ENCODE measurements at regions of chr9 and their contacts with region 1.

Region 1: DNA sequence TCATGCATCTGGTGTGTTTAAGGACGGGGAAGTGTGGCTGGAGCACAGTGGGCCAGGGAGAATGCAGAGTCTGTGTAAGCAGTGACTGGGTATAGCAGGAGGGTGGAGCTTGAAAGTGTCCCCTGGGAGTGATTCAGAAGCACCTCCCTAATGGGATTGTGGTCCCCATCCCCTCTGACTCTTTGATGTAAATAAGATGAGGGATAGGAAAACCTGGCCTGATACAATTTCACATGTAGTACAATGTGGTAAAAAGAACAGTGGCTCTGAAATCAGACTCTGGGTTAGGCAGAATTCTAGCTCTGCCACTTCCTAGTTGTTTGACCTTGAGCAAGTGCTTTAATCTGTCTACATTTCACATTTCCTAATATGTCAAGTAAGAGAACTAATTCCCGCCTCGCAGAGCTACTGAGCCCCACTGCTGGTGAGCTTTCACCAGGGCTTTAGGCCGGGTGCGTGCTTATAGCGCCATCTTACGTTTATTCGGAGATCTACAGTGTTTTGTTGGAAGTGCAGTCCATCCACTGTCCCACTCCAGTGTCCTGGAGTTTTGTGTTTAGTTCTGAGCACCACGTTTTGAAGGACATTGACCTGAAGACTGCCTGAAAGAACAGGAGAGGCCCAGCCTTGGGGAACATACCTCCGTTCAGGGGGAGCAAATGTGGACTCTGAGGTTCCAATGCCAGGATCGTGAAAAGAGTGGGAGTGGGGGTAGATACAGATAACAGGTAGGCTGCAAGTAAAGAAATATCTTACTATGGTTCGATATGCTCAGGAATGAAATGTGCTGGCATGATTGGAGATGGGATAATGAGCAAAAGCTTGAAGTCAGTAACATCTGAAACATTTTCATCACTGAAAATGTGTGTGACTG is 51.2 kb upstream of the TESK1 start:
- DNase-seq: peak; percentile 81 to 90 (median 81)
- H3K4me3 ChIP-seq: peak overlapping the region in 1 of 3 experiments; percentile 27
- H3K4me3 Mint-ChIP-seq: no peak overlapping the region
- H3K27ac ChIP-seq: peak overlapping the region; percentile 41 to 76
- H3K27ac Mint-ChIP-seq: no peak overlapping the region
- H3K4me1 ChIP-seq: peaks cover 11 to 13% of the 10 kb centered on the region in 2 donors
- H3K4me1 Mint-ChIP-seq: peaks cover 3% of the 10 kb centered on the region
- H3K27me3 ChIP-seq: no peaks in the 10 kb centered on the region
- H3K27me3 Mint-ChIP-seq: peaks cover 0 to 2% (median 0%) of the 10 kb centered on the region in 3 donors
- CTCF ChIP-seq: peak; percentile 93

Region 2: DNA sequence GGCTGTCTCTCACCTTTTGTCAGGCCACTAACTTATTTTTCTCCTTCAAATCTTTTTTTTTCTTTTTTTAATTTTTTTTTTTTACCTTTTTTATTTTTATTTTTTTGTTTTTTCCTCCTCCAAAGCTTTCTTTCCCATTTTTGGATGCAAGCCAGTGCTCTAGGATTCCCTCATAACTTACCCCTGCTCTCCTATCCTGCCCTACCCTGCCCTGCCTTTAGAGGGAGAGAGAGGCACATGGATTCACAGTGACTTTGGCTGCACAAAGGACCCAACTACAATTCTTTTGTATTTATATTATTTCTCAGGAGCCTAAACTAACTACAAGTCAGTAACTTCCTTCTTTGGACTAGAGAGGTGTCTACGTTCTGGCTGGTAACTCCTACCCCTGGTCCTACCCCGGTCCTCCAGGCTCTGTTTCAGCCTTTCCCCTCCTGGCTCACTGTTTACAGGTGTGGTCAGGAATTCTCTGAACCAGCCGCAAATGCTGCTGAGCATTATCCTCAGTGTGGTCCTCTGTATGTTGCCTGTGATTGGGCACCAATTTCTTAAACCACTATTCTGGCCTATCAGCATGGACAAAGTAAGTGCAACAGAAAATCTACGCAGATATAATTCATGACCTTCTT is 72.4 kb before region 1 on chr9:
- intact Hi-C with region 1: loop called (anchors 2 kb)
- DNase-seq: peak; percentile 38 to 54 (median 40)
- H3K4me3 ChIP-seq: no peak overlapping the region
- H3K4me3 Mint-ChIP-seq: no peak overlapping the region
- H3K27ac ChIP-seq: no peak overlapping the region
- H3K27ac Mint-ChIP-seq: peak overlapping the region in 2 of 7 donors; percentile 42 to 61
- H3K4me1 ChIP-seq: no peaks in the 10 kb centered on the region
- H3K4me1 Mint-ChIP-seq: no peaks in the 10 kb centered on the region
- H3K27me3 ChIP-seq: peaks cover 0 to 3% of the 10 kb centered on the region in 2 donors
- H3K27me3 Mint-ChIP-seq: peaks cover 0 to 6% (median 2%) of the 10 kb centered on the region in 3 donors
- CTCF ChIP-seq: peak; percentile 77

Region 3: GRCh38 chr9:35489313-35490154 is 64.4 kb before region 1 on chr9 and contains the start of gene RUSC2:
- intact Hi-C with region 1: loop called in 1 of 2 experiments (anchors 2 kb)
- DNase-seq: peak; percentile 87 to 92 (median 89)
- H3K4me3 ChIP-seq: peak within 1 kb of the TSS; percentile 56 to 97 (median 93)
- H3K4me3 Mint-ChIP-seq: peak within 1 kb of the TSS; percentile 98 to 99
- H3K27ac ChIP-seq: peak within 1 kb of the TSS; percentile 81 to 92
- H3K27ac Mint-ChIP-seq: peak within 1 kb of the TSS; percentile 91 to 96 (median 92)
- H3K4me1 ChIP-seq: peaks cover 34 to 36% of the 10 kb centered on the region in 2 donors
- H3K4me1 Mint-ChIP-seq: peaks cover 35% of the 10 kb centered on the region
- H3K27me3 ChIP-seq: no peaks in the 10 kb centered on the region
- H3K27me3 Mint-ChIP-seq: peaks cover 2 to 3% (median 2%) of the 10 kb centered on the region in 3 donors
- CTCF ChIP-seq: peak; percentile 52
- polyA plus RNA-seq, gene RUSC2: 2.2 to 18.8 (median 3.7) TPM

Region 4: GRCh38 chr9:35538361-35539234 is 15.3 kb before region 1 on chr9:
- intact Hi-C with region 1: loop called in 1 of 2 experiments (anchors 2 kb)
- DNase-seq: peak; percentile 90 to 93 (median 91)
- H3K4me3 ChIP-seq: peak overlapping the region; percentile 3 to 64 (median 19)
- H3K4me3 Mint-ChIP-seq: peak overlapping the region; percentile 78 to 92
- H3K27ac ChIP-seq: peak overlapping the region; percentile 84 to 88
- H3K27ac Mint-ChIP-seq: peak overlapping the region; percentile 96 to 99 (median 99)
- H3K4me1 ChIP-seq: peaks cover 65 to 72% of the 10 kb centered on the region in 2 donors
- H3K4me1 Mint-ChIP-seq: peaks cover 73% of the 10 kb centered on the region
- H3K27me3 ChIP-seq: no peaks in the 10 kb centered on the region
- H3K27me3 Mint-ChIP-seq: no peaks in the 10 kb centered on the region
- CTCF ChIP-seq: no peak

Region 5: GRCh38 chr9:35776018-35776417 is 222.1 kb after region 1 on chr9:
- intact Hi-C with region 1: no loop called
- DNase-seq: no peak
- H3K4me3 ChIP-seq: no peak overlapping the region
- H3K4me3 Mint-ChIP-seq: no peak overlapping the region
- H3K27ac ChIP-seq: no peak overlapping the region
- H3K27ac Mint-ChIP-seq: peak overlapping the region in 2 of 7 donors; percentile 59 to 68
- H3K4me1 ChIP-seq: peaks cover 15 to 16% of the 10 kb centered on the region in 2 donors
- H3K4me1 Mint-ChIP-seq: peaks cover 16% of the 10 kb centered on the region
- H3K27me3 ChIP-seq: no peaks in the 10 kb centered on the region
- H3K27me3 Mint-ChIP-seq: peaks cover 0 to 2% (median 1%) of the 10 kb centered on the region in 3 donors
- CTCF ChIP-seq: no peak